PC-9 (cell line): ENCODE measurements at regions of chr1 and their contacts with region 1.

Region 1: GRCh38 chr1:29372108-29372507 is 135.8 kb downstream of the PTPRU start:
- DNase-seq: no peak
- H3K4me3 ChIP-seq: no peak overlapping the region
- H3K27ac ChIP-seq: no peak overlapping the region
- H3K4me1 ChIP-seq: no peaks in the 10 kb centered on the region
- H3K27me3 ChIP-seq: peaks cover 83% of the 10 kb centered on the region
- CTCF ChIP-seq: no peak

Region 2: GRCh38 chr1:29264773-29265389 is 107.2 kb before region 1 on chr1:
- CTCF ChIA-PET with region 1: no interaction called
- POLR2A ChIA-PET with region 1: interaction called, 18 read pairs
- intact Hi-C with region 1: no loop called
- DNase-seq: no peak
- H3K4me3 ChIP-seq: no peak overlapping the region
- H3K27ac ChIP-seq: no peak overlapping the region
- H3K4me1 ChIP-seq: no peaks in the 10 kb centered on the region
- H3K27me3 ChIP-seq: no peaks in the 10 kb centered on the region
- CTCF ChIP-seq: no peak

Region 3: DNA sequence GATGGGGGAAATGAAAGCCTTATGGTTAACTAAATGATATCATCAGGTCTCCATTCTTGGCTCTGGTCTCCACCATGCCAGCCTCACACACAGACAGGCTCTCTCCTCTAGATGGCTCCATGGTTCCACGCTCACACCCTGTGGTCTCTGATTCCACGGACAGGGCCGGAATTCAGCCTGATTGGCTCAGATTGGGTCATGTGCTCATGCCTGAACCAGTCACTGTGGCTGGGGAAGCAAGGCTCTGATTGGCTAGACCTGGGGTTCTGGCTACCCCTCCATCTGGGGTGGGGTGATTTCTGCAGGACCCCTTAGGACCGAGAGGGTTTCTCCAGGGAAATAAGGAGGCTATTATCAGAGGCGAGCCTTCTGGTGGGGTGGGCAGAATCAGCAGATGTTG is 141.2 kb after region 1 on chr1:
- CTCF ChIA-PET with region 1: no interaction called
- POLR2A ChIA-PET with region 1: no interaction called
- intact Hi-C with region 1: no loop called
- DNase-seq: peak; percentile 42 to 54
- H3K4me3 ChIP-seq: no peak overlapping the region
- H3K27ac ChIP-seq: no peak overlapping the region
- H3K4me1 ChIP-seq: no peaks in the 10 kb centered on the region
- H3K27me3 ChIP-seq: no peaks in the 10 kb centered on the region
- CTCF ChIP-seq: peak; percentile 73